ENCODE measurements at regions of chr3 and their contacts with region 1.

Region 1: GRCh38 chr3:189512039-189512438 is 119.2 kb upstream of the TP63 start:
- DNase-seq: no peak
- ATAC-seq: no peak
- H3K4me3 ChIP-seq: no peak overlapping the region
- H3K27ac ChIP-seq: no peak overlapping the region
- H3K4me1 ChIP-seq: peaks cover 5% of the 10 kb centered on the region
- H3K27me3 ChIP-seq: no peaks in the 10 kb centered on the region
- CTCF ChIP-seq: no peak

Region 2: GRCh38 chr3:189467451-189467850 is 44.6 kb before region 1 on chr3:
- intact Hi-C with region 1: no loop called
- DNase-seq: no peak
- ATAC-seq: no peak
- H3K4me3 ChIP-seq: no peak overlapping the region
- H3K27ac ChIP-seq: no peak overlapping the region
- H3K4me1 ChIP-seq: no peaks in the 10 kb centered on the region
- H3K27me3 ChIP-seq: no peaks in the 10 kb centered on the region
- CTCF ChIP-seq: no peak

Region 3: DNA sequence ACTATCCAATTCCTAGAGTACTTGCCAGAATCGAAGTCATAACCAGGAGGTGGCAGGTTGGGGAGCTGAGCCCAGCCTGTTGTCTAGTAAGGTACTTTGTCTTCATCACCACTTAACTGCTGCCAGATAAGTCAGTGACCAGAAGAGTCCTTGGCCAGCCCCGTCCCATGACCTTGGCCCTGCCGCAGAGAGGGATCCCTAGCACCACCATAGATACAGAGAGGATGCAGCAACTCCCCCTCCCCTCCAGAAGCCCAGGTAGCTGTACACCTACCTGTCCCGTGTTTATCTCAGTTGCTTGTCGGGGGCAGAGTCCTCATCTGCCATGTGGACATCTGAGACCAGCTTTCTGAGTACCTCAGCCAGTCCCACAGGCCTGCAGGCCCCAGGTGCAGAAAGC is 34.4 kb before region 1 on chr3:
- intact Hi-C with region 1: no loop called
- DNase-seq: no peak
- ATAC-seq: no peak
- H3K4me3 ChIP-seq: no peak overlapping the region
- H3K27ac ChIP-seq: no peak overlapping the region
- H3K4me1 ChIP-seq: no peaks in the 10 kb centered on the region
- H3K27me3 ChIP-seq: no peaks in the 10 kb centered on the region
- CTCF ChIP-seq: no peak

Region 4: GRCh38 chr3:189557824-189558223 is 45.8 kb after region 1 on chr3:
- intact Hi-C with region 1: loop called in 1 of 2 experiments (anchors 5 kb)
- DNase-seq: no peak
- ATAC-seq: no peak
- H3K4me3 ChIP-seq: no peak overlapping the region
- H3K27ac ChIP-seq: no peak overlapping the region
- H3K4me1 ChIP-seq: no peaks in the 10 kb centered on the region
- H3K27me3 ChIP-seq: no peaks in the 10 kb centered on the region
- CTCF ChIP-seq: no peak

Region 5: DNA sequence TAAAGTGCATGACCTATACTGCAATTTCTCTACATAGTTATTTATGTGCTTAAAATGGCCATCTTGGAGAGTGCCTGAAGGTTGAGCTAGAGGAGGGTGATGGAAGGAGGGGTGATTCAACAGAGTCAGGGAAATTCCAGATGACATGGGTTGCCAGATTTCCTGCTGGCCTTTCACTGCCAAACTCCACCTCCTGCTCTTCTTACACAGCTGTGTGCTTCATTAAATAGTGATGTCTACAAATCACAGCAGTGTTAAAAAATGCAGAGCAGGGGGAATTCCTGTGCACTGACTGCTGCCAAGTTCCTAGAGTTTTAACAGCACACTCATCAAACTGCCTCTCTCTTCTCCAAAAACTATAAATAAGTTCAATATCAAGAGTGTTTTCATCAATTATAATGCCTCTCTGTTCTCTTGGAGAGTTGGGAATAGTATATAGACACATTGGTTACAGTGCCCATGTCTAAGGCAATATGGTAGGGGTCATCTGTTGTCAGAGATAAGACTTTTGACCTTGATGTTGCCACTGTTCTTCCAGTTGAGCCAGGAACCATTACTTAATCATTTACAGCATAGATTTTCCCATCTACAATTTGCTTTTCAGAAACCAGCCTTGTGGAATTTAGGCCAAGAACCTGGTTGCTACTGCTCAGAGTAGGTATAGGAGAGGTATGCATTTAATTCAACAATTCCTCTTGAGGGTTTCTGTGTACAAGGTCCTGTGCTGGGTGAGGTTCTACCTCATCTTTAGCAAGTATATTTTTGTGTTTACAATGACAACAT is 198.8 kb after region 1 on chr3:
- intact Hi-C with region 1: no loop called
- DNase-seq: peak; percentile 27 to 71
- ATAC-seq: peak; percentile 84 to 96 (median 96)
- H3K4me3 ChIP-seq: no peak overlapping the region
- H3K27ac ChIP-seq: peak overlapping the region; percentile 38
- H3K4me1 ChIP-seq: peaks cover 68% of the 10 kb centered on the region
- H3K27me3 ChIP-seq: no peaks in the 10 kb centered on the region
- CTCF ChIP-seq: no peak

Region 6: GRCh38 chr3:190197346-190197763 is 685.3 kb after region 1 on chr3:
- intact Hi-C with region 1: no loop called
- DNase-seq: no peak
- ATAC-seq: no peak
- H3K4me3 ChIP-seq: no peak overlapping the region
- H3K27ac ChIP-seq: no peak overlapping the region
- H3K4me1 ChIP-seq: no peaks in the 10 kb centered on the region
- H3K27me3 ChIP-seq: no peaks in the 10 kb centered on the region
- CTCF ChIP-seq: no peak

Measured in psoas muscle (tissue), 8 donors.